Endothelial cell of umbilical vein (primary cell): ENCODE measurements at regions of chr1 and their contacts with region 1.

Region 1: GRCh38 chr1:159598196-159598595 is 10.6 kb downstream of the APCS start:
- DNase-seq: peak; percentile 72
- H3K4me3 ChIP-seq: no peak overlapping the region
- H3K27ac ChIP-seq: peak overlapping the region; percentile 99
- H3K4me1 ChIP-seq: peaks cover 40% of the 10 kb centered on the region
- H3K27me3 ChIP-seq: no peaks in the 10 kb centered on the region
- CTCF ChIP-seq: no peak
- POLR2A ChIP-seq: peak; percentile 45

Region 2: DNA sequence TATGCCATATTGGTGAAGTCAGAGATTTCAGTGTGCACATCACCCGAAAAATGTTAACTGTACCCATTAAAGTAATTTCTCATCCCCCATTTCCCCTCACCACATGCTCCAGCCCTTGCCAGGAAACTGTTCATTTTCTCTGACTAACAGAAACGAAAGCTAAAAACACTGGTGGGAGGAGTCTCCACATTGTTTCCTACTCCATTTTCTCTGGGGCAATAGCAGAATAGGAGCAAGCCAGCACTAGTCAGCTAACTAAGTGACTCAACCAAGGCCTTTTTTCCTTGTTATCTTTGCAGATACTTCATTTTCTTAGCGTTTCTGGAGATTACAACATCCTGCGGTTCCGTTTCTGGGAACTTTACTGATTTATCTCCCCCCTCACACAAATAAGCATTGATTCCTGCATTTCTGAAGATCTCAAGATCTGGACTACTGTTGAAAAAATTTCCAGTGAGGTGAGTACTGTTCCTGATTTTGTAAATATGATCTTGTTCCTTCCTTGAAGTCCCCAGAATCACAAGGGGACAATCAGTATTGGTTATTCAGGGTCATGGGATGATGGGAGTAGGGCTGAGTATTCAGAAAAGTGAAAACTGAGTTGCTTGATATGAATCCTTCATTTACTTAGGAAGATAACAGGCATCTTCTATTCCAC is 588.4 kb before region 1 on chr1 and contains the start of gene IFI16:
- CTCF ChIA-PET with region 1: no interaction called
- POLR2A ChIA-PET with region 1: no interaction called
- dilution Hi-C with region 1: no loop called
- intact Hi-C with region 1: loop called (anchors 10 kb)
- DNase-seq: peak; percentile 96
- H3K4me3 ChIP-seq: peak within 1 kb of the TSS; percentile 56 to 99 (median 99)
- H3K27ac ChIP-seq: peak within 1 kb of the TSS; percentile 86
- H3K4me1 ChIP-seq: peaks cover 37% of the 10 kb centered on the region
- H3K27me3 ChIP-seq: no peaks in the 10 kb centered on the region
- CTCF ChIP-seq: no peak
- POLR2A ChIP-seq: peak; percentile 83
- total RNA-seq, gene IFI16: 174 and 183 TPM in 2 replicates

Region 3: DNA sequence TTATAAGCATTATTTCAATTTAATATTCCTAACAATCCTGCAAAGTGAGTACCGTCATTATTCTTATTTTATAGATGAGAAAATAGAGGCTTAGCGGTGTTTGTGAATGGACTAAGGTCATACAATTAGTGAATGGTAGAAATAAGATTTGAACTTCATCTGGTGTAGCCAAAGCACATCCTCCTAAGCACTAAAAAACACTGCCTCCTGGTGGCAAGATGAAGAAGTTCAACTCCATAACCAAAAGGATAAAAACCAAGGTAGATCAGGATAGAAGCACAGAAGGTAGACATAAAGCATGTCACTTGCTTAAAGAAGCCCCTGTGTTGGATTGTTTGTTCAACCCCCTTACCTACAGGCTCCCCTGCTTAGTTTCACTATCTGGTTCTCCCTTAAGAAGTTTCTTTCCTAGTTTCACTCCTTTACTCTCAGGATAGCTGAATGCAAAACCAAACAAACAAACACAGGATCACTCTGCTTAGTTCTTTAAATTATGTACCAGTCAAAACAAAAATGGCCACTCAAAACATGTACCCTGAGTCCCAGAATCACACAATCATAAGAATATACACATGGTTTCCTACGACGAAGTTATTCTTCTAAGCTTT is 508.9 kb before region 1 on chr1:
- CTCF ChIA-PET with region 1: no interaction called
- POLR2A ChIA-PET with region 1: no interaction called
- dilution Hi-C with region 1: no loop called
- intact Hi-C with region 1: no loop called
- DNase-seq: no peak
- H3K4me3 ChIP-seq: no peak overlapping the region
- H3K27ac ChIP-seq: no peak overlapping the region
- H3K4me1 ChIP-seq: peaks cover 35% of the 10 kb centered on the region
- H3K27me3 ChIP-seq: peaks cover 0 to 2% of the 10 kb centered on the region in 2 experiments
- CTCF ChIP-seq: peak; percentile 19 to 32
- POLR2A ChIP-seq: no peak

Region 4: DNA sequence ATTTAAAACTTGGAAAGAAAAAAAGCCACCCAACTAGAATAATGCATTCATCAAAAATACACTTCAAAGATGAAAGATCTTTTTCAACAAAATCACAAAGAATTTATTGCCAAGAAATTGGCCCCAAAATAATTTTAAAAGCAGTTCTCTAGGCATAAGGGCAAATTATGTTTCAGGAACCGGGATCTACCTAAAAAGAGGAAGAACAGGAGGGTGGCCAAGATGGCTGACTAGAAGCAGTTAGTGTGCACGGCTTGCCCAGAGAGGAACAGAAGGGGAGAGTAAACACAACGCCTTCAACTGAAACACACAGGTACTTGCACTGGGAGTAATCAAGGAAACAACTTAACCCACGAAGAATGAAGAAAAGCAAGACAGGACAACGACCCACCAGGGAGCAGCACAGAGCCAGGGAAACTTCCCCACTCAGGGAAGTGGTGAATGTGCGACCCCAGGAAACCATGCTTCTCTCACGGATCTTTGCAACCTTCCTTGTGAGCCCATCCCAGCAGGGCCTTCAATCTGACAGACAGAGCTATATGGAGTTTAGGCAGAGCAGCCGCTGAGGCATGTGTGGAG is 347.5 kb before region 1 on chr1:
- CTCF ChIA-PET with region 1: no interaction called
- POLR2A ChIA-PET with region 1: no interaction called
- dilution Hi-C with region 1: no loop called
- intact Hi-C with region 1: loop called (anchors 2 kb)
- DNase-seq: peak; percentile 28
- H3K4me3 ChIP-seq: no peak overlapping the region
- H3K27ac ChIP-seq: no peak overlapping the region
- H3K4me1 ChIP-seq: no peaks in the 10 kb centered on the region
- H3K27me3 ChIP-seq: no peaks in the 10 kb centered on the region
- CTCF ChIP-seq: peak; percentile 21 to 38
- POLR2A ChIP-seq: no peak

Region 5: GRCh38 chr1:159492575-159493323 is 105.4 kb before region 1 on chr1:
- CTCF ChIA-PET with region 1: no interaction called
- POLR2A ChIA-PET with region 1: no interaction called
- dilution Hi-C with region 1: no loop called
- intact Hi-C with region 1: loop called (anchors 1 kb)
- DNase-seq: peak; percentile 65
- H3K4me3 ChIP-seq: no peak overlapping the region
- H3K27ac ChIP-seq: peak overlapping the region; percentile 84
- H3K4me1 ChIP-seq: peaks cover 13% of the 10 kb centered on the region
- H3K27me3 ChIP-seq: no peaks in the 10 kb centered on the region
- CTCF ChIP-seq: no peak
- POLR2A ChIP-seq: peak; percentile 31

Region 6: GRCh38 chr1:159775716-159776115 is 177.5 kb after region 1 on chr1:
- CTCF ChIA-PET with region 1: interaction called, 5 read pairs
- POLR2A ChIA-PET with region 1: no interaction called
- dilution Hi-C with region 1: no loop called
- intact Hi-C with region 1: loop called (anchors 1 kb)
- DNase-seq: peak; percentile 46
- H3K4me3 ChIP-seq: no peak overlapping the region
- H3K27ac ChIP-seq: peak overlapping the region; percentile 9
- H3K4me1 ChIP-seq: peaks cover 53% of the 10 kb centered on the region
- H3K27me3 ChIP-seq: no peaks in the 10 kb centered on the region
- CTCF ChIP-seq: no peak
- POLR2A ChIP-seq: peak; percentile 49